Activated naive CD4-positive, alpha-beta T cell treated with anti-CD3 and anti-CD28 coated beads for 36 hours (primary cell): ENCODE measurements at regions of chr12 and their contacts with region 1.

Region 1: DNA sequence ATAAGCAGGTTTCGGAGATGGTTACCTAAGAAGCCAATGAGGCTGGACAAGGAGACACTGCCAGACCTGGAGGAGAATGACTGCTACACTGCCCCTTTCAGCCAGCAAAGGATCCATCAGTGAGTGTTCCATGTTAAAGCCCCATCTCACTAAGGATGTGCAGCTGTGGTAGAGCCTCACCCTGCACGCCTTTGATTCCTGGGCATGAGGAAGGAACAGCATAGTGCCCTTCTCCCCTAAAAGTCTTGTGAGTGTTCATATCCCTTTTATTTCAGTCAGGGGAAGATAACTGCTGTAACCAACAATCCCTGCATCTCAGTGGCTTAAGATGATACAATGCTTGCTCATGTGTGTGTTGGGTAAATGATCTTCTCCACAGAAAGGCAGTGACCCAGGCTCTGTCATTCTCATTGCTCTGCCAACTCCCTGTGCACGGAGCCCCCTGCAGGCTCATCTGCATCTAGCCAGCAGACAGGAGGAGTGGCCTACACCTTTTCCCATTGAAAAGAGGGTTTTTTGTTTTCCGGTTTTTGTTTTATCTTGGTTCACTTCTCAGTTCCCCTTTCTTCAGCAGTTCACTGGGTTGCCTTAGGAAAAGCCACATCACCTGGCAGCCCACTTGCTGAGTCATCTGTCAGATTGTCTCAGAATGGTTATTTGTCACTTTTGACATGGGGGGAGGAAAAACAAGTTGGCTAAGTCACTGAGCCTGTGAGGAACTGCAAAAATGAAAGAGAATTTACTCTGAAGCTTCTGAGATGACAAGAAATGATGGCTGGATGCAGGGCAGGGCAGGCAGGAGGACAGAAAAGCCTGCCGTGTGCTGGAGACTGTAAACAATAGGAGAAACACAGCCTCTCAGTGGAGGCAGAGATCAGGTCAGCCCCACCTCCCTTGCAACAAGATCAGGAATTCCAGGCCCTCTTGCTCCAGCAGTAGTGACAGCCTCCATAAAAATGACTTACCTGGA is 193.3 kb downstream of the ANO4 start:
- DNase-seq: peak; percentile 4
- H3K4me3 Mint-ChIP-seq: no peak overlapping the region
- H3K27ac Mint-ChIP-seq: no peak overlapping the region
- H3K4me1 Mint-ChIP-seq: no peaks in the 10 kb centered on the region
- H3K27me3 Mint-ChIP-seq: peaks cover 4% of the 10 kb centered on the region

Region 2: DNA sequence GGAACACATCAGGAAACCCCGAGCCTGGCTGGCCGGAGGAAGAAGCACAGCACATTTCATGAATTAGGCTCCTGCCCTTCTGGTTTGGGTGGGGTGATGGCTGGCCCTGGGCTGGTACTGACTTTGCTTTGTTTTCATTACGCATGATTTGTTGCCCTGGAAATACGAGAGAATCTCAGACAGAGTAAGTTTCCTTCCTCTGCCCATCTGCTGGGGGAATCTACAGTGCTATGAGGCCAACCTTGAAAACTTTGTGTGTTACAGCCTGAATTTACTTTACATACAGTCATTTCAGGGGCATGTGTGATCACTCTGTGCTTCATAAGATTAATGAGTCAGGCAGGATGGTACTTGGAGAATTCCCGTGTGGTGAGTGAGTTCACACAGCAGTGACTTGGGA is 242.7 kb after region 1 on chr12:
- CTCF ChIA-PET with region 1: no interaction called
- intact Hi-C with region 1: loop called (anchors 10 kb)
- DNase-seq: no peak
- H3K4me3 Mint-ChIP-seq: no peak overlapping the region
- H3K27ac Mint-ChIP-seq: no peak overlapping the region
- H3K4me1 Mint-ChIP-seq: no peaks in the 10 kb centered on the region
- H3K27me3 Mint-ChIP-seq: peaks cover 8% of the 10 kb centered on the region